Activated naive CD4-positive, alpha-beta T cell treated with anti-CD3 and anti-CD28 coated beads for 36 hours (primary cell): ENCODE measurements at regions of chr13 and their contacts with region 1.

Region 1: DNA sequence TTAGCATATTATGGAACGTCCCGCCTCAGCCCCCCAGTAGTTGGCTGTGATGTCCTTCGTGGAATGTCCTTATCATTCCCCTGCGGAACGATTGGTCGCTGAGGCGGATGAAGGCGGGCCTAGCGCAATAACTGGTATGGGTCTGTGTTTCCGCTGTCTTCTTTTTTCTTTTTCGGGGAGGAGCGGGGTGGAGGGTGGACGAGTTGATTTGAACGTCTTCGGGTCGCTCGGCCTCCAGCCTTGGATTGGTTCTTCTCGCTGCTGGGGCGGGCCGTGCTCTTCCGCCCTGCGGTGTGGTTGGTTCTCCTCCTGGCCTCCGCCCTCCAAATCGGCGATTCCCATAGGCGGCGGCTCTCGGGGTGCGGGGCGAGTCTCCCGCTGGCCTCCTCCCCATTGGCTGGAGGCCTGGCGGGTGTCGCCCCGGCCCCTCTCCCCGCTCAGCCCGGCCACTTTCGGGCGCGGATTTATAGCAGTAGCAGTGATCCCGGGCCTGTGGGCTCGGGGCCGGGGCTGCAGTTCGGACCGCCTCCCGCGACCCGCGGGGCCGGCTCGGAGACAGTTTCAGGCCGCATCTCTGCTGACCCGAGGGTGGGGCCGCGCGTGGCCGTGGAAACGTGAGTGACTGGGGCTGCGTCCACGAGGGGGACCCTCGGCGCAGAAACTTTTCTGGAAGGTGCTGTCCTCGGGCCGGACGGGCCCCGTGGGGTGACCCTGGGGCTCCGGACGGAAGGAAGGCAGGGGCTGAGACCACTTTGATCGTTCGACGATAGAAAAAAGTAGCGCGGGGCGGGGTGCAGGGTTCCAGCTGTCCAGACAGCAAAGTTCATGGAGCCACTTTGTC is 2.1 kb downstream of the ING1 start:
- DNase-seq: peak; percentile 98
- H3K4me3 Mint-ChIP-seq: peak overlapping the region; percentile 93
- H3K27ac Mint-ChIP-seq: peak overlapping the region; percentile 96
- H3K4me1 Mint-ChIP-seq: peaks cover 31% of the 10 kb centered on the region
- H3K27me3 Mint-ChIP-seq: no peaks in the 10 kb centered on the region

Region 2: GRCh38 chr13:110455941-110456340 is 259.7 kb before region 1 on chr13:
- CTCF ChIA-PET with region 1: no interaction called
- intact Hi-C with region 1: loop called (anchors 2 kb)
- DNase-seq: peak; percentile 84
- H3K4me3 Mint-ChIP-seq: peak overlapping the region; percentile 52
- H3K27ac Mint-ChIP-seq: no peak overlapping the region
- H3K4me1 Mint-ChIP-seq: peaks cover 4% of the 10 kb centered on the region
- H3K27me3 Mint-ChIP-seq: peaks cover 20% of the 10 kb centered on the region

Region 3: DNA sequence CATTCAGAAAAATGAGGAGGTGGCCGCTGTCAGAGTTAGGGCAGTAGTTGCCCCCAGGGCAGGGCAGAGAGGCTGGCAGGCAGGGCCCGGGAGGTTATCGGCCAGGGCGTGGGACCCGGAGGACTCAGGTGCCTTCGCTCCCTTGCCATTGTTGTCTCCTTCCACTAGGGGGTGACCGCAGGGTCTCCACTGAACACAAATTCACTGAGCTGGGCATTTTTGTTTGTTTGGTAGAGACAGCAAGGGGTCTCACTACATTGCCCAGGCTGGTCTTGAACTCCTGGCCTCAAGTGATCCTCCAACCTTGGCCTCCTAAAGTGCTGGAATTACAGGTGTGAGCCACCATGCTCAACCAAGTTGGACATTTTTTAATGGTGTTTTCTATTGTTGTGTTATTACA is 34.8 kb before region 1 on chr13:
- CTCF ChIA-PET with region 1: interaction called, 4 read pairs
- intact Hi-C with region 1: loop called (anchors 1 kb)
- DNase-seq: peak; percentile 8
- H3K4me3 Mint-ChIP-seq: no peak overlapping the region
- H3K27ac Mint-ChIP-seq: no peak overlapping the region
- H3K4me1 Mint-ChIP-seq: no peaks in the 10 kb centered on the region
- H3K27me3 Mint-ChIP-seq: no peaks in the 10 kb centered on the region

Region 4: DNA sequence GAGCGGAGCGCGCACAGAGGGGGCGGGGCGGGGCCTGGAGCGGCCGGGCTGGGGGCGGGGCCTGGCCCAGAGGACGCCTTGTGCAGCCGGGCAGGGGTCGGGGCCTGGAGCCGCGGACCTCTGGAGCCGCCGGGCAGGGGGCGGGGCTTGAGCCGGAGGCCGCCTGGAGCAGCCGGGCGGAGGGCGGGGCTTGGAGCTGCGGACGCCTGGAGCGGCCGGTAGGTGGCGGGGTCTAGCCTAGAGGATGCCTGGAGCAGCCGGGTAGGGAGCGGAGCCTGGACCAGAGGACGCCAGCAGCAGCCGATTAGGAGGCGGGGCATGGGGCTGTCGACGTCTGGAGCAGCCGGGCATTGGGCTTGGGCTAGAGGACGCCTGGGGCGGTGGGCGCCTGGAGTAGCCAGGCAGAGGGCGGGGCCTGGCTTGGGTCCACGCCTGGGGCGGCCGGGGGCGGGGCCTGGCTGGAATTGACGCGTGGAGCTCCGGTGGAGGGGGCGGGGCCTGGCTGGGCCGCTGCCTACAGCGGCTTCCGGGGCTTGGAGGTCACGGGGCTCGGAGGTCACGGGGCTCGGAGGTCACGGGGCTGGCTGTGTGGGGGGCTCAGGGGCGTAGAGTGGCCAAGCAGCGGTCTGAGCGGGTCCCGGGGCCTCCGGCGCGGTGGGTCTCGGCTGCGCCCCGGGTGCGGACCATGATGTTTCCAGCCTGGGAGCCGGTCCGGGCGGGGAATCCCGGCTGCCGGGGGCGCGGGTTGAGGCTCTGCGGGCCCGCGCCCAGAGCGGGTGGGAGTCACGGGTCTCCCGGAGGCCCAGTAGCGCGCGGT is 199.7 kb after region 1 on chr13 and contains the start of gene ANKRD10:
- CTCF ChIA-PET with region 1: interaction called, 3 read pairs
- intact Hi-C with region 1: loop called (anchors 1 kb)
- DNase-seq: peak; percentile 97
- H3K4me3 Mint-ChIP-seq: peak within 1 kb of the TSS; percentile 85
- H3K27ac Mint-ChIP-seq: peak within 1 kb of the TSS; percentile 93
- H3K4me1 Mint-ChIP-seq: peaks cover 43% of the 10 kb centered on the region
- H3K27me3 Mint-ChIP-seq: no peaks in the 10 kb centered on the region
- total RNA-seq, gene ANKRD10: 79.8 to 82.5 TPM

Region 5: GRCh38 chr13:111184458-111185401 is 469.1 kb after region 1 on chr13:
- CTCF ChIA-PET with region 1: no interaction called
- intact Hi-C with region 1: loop called (anchors 5 kb)
- DNase-seq: peak; percentile 67
- H3K4me3 Mint-ChIP-seq: peak overlapping the region; percentile 58
- H3K27ac Mint-ChIP-seq: peak overlapping the region; percentile 86
- H3K4me1 Mint-ChIP-seq: peaks cover 94% of the 10 kb centered on the region
- H3K27me3 Mint-ChIP-seq: no peaks in the 10 kb centered on the region